ENCODE measurements at regions of chr10 and their contacts with region 1.

Region 1: GRCh38 chr10:116891208-116891607 is 41.9 kb downstream of the ENO4 start:
- DNase-seq: peak in 6 of 10 donors; percentile 42 to 66 (median 60)
- H3K4me3 ChIP-seq: peak overlapping the region in 7 of 59 donors; percentile 0 to 30 (median 8)
- H3K27ac ChIP-seq: peak overlapping the region in 30 of 59 donors; percentile 0 to 74 (median 38)
- H3K27me3 ChIP-seq: no peaks in the 10 kb centered on the region
- CTCF ChIP-seq: no peak

Region 2: DNA sequence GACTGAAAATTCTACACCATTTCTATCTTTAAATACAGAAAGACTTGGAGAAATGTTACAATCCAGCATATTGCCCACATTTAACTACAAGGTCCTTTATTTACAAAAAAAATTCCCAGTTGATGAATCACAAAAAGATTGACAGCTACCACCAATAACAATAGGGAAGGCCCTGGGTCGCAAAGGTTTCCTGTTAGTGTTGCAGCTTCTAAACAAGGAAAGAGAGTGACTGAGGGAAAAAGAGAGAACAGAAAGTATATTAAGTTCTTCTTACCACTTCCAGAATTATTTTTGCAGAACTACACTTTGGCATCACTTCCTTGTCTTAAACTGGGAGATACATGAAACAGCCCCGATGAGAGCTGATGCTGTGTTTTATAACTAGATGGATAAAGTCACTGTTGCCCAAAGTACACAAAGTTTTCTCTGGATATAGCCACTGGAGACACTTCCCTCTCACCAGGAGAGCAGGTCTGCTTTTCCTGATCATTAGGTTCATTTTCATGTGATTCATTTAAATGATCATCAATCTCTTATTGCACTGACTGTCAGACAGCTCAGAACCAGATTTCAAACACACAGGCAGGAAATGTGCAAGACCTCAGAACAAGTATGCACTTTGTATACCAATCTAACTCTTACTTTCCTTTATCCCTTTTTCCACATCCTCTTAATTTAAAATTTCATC is 56.8 kb after region 1 on chr10:
- intact Hi-C with region 1: loop called in 1 of 2 experiments (anchors 10 kb)
- DNase-seq: no peak
- H3K4me3 ChIP-seq: no peak overlapping the region
- H3K27ac ChIP-seq: peak overlapping the region in 58 of 59 donors; percentile 11 to 98 (median 77)
- H3K27me3 ChIP-seq: no peaks in the 10 kb centered on the region
- CTCF ChIP-seq: no peak